Left ventricle myocardium superior (tissue), 1 donor: ENCODE measurements at regions of chr6 and their contacts with region 1.

Region 1: DNA sequence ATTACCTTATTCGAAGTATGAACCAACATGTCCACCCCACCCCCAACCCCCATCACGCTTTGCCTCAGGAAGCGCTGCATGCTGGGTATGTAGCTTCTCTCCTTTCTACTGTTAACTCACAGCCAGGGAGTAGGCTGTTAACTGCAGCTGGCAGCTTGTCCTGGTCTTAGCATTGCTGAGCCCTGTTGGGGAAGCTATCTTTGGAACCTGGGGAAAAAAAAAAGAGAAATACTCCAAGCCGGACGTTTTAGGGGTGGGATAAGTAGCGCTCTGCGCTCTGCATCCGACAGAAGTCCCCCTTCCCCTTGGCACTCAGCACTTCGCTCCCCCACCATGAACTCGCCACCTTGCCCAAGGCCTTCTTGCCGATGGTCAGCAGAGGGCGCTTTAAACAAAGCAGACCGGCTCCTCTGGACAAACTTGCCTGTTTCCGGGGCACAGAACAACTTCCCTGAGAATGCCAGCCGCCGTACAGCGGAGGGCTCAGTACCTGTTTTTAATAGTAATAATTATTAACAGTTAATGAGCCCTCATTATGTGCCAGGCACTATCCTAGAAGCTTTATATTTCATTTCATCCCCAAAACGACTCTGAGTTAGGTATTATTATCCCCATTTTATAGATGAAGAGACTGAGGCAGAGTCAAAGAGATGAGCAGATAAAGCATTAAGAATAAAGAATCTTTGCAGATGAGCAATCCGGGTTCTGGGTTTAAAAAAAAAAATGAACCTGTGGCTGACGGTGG is 35.2 kb upstream of the MDFI start:
- DNase-seq: peak; percentile 78
- ATAC-seq: peak; percentile 84

Region 2: DNA sequence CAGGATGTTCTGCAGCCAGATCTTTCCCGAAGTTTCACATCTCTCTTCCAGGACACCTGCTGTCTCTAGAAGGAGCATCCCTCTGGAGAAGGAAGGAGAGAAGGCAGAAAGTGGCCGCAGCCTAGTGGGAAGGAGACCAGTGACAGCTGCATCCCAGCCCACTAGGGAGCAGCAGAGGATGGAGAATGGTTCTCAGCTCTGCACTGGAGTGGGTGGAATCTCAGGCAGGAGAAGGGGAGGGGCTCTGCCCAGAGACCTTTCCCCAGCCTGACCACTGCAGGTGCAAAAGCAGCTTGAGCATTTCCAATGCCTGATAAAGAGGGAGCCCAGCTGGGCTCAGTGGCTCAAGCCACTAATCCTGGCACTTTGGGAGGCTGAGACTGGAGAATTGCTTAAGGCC is 235.3 kb before region 1 on chr6:
- intact Hi-C with region 1: loop called (anchors 5 kb)
- DNase-seq: peak; percentile 37
- ATAC-seq: peak; percentile 80

Region 3: GRCh38 chr6:41683510-41684310 is 80.7 kb after region 1 on chr6:
- intact Hi-C with region 1: loop called (anchors 2 kb)
- DNase-seq: peak; percentile 91
- ATAC-seq: peak; percentile 83